CD8-positive, alpha-beta T cell (primary cell): ENCODE measurements at regions of chr19 and their contacts with region 1.

Region 1: GRCh38 chr19:2061495-2062381 is 10.7 kb upstream of the MKNK2 start:
- DNase-seq: peak; percentile 99 to 100 (median 99)
- ATAC-seq: peak; percentile 94
- H3K4me3 ChIP-seq: peak overlapping the region; percentile 73 to 80
- H3K4me3 Mint-ChIP-seq: peak overlapping the region; percentile 91
- H3K27ac ChIP-seq: peak overlapping the region; percentile 91 to 96
- H3K27ac Mint-ChIP-seq: peak overlapping the region; percentile 95
- H3K4me1 ChIP-seq: peaks cover 52% of the 10 kb centered on the region
- H3K4me1 Mint-ChIP-seq: peaks cover 44% of the 10 kb centered on the region
- H3K27me3 ChIP-seq: no peaks in the 10 kb centered on the region
- H3K27me3 Mint-ChIP-seq: no peaks in the 10 kb centered on the region
- CTCF ChIP-seq: no peak

Region 2: DNA sequence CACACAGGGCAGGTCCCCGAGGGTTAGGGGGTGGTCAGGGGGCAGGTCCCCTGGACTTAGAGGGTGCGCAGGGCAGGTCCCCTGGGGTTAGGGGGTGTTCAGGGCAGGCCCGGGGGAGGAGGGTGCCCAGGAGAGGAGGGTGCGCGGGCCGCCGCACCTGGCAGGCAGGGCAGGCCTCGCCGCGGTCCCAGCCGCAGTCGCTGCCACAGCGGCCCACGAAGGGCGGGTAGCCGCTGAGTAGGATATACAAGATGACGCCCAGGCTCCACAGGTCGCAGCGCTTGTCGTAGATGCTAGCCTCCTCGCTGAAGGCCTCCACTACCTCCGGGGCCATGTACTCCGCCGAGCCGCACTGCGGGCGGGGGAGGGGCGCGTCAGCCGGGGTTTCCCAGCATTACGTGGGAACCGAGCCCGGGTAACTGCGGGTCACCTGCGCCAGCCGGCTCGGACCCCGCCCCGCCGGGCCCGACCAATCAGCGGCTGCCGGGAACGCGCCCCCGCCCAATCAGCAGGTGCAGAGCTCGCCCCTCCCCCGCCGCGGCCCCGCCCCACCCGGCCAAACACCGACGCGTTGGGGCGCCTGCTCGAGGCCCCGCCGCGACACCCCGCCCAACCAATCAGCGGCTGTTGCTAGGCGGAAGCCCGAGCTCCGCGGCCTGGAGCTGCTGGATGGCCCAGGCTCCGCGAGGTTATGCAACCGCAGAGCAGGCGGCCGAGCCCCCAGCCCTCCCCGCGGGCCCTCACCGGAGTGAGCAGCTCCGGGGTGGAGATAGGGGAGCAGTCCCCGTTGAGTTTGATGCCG is 19.9 kb before region 1 on chr19:
- CTCF ChIA-PET with region 1: interaction called, 3 read pairs
- POLR2A ChIA-PET with region 1: interaction called, 9 read pairs
- intact Hi-C with region 1: loop called in 1 of 2 experiments (anchors 1 kb)
- DNase-seq: peak; percentile 99 to 100 (median 100)
- ATAC-seq: peak; percentile 85
- H3K4me3 ChIP-seq: peak overlapping the region; percentile 28 to 62
- H3K4me3 Mint-ChIP-seq: peak overlapping the region; percentile 65
- H3K27ac ChIP-seq: peak overlapping the region; percentile 96 to 100
- H3K27ac Mint-ChIP-seq: peak overlapping the region; percentile 93
- H3K4me1 ChIP-seq: peaks cover 54% of the 10 kb centered on the region
- H3K4me1 Mint-ChIP-seq: peaks cover 28% of the 10 kb centered on the region
- H3K27me3 ChIP-seq: no peaks in the 10 kb centered on the region
- H3K27me3 Mint-ChIP-seq: no peaks in the 10 kb centered on the region
- CTCF ChIP-seq: no peak

Region 3: DNA sequence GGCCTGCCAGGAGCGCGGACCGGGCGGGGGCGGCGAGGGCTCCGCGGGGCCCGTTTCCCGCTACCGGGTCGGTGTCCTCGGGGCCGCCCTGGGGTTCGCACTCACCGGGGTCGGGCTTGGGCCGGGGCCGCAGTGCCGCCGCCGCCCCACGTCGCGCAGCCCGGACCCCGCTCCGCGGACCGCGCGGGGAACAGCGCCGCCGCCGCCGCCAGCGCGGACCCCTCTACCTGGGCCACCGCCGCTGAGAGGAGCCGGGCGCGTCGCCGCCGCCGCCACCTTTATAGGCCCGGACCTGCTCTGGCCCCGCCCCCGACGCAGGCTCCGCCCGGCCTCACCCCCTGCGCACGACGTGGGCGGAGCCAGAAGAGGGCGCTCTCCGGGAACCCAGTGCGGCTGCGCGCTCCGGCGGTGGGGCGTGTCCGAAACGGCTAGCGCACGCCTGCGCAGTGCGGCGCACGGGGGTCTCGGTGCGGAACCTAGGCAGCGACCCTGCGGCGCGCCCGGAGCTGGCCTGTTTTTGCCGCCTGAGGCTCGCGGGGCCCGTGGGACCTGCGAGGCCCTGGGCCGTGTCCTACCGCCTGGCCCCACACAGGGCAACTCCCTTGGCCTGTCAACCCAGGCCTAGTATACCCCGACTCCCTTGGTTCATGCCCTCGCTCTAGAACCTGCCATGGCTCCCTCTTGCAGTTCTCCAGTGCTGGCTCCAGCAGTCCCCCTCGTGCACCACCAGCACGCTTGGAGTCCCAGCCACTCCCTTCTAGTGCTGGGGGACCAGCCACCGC is 10.6 kb before region 1 on chr19 and contains the start of gene MKNK2:
- CTCF ChIA-PET with region 1: interaction called, 4 read pairs
- POLR2A ChIA-PET with region 1: interaction called, 26 read pairs
- intact Hi-C with region 1: loop called (anchors 1 kb)
- DNase-seq: peak; percentile 87 to 99 (median 94)
- ATAC-seq: peak; percentile 79
- H3K4me3 ChIP-seq: peak within 1 kb of the TSS; percentile 94 to 98
- H3K4me3 Mint-ChIP-seq: peak within 1 kb of the TSS; percentile 86
- H3K27ac ChIP-seq: peak within 1 kb of the TSS; percentile 78 to 94
- H3K27ac Mint-ChIP-seq: peak within 1 kb of the TSS; percentile 89
- H3K4me1 ChIP-seq: peaks cover 73% of the 10 kb centered on the region
- H3K4me1 Mint-ChIP-seq: peaks cover 46% of the 10 kb centered on the region
- H3K27me3 ChIP-seq: no peaks in the 10 kb centered on the region
- H3K27me3 Mint-ChIP-seq: no peaks in the 10 kb centered on the region
- CTCF ChIP-seq: peak; percentile 29
- total RNA-seq, gene MKNK2: 453 to 455 TPM